ENCODE measurements at regions of chr10 and their contacts with region 1.

Region 1: GRCh38 chr10:33330543-33331378 is 3.7 kb downstream of the NRP1 start:
- DNase-seq: no peak
- H3K4me3 ChIP-seq: peak overlapping the region; percentile 80 to 86
- H3K27ac ChIP-seq: peak overlapping the region; percentile 20
- H3K4me1 ChIP-seq: peaks cover 26% of the 10 kb centered on the region
- H3K27me3 ChIP-seq: no peaks in the 10 kb centered on the region
- CTCF ChIP-seq: peak; percentile 49 to 90 (median 80)
- POLR2A ChIP-seq: no peak

Region 2: DNA sequence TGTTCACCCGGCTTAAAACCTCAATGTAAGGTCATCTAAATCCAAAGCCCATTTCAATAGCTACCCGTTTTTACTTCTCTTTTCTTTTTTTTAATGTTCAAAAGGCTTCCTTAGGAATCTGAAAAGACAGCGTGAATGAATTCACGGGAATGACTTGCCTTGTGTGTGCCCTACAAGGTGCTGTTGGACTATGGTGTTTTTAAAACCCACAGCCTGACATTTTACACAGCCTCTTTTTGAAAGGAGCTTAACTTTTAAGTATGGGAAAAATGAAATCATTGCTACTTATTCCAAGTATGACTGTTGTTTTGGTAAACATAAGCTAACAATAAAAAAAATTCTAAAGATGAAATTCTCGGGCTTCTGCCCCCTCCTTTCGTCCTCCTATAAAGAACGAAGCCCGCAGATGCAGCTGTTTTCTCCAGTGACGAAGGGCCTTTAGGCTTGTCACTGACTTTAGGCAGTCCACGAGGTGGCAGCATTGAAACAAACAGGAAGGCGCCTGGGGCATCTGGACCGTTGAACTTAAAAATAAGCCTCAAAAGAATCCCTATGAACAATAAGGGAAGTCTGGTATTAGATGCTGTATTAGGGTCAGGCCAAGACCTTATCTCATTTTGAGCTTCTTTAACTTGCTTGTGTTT is 137.6 kb before region 1 on chr10:
- intact Hi-C with region 1: loop called (anchors 10 kb)
- DNase-seq: no peak
- H3K4me3 ChIP-seq: no peak overlapping the region
- H3K27ac ChIP-seq: peak overlapping the region; percentile 54
- H3K4me1 ChIP-seq: peaks cover 47% of the 10 kb centered on the region
- H3K27me3 ChIP-seq: no peaks in the 10 kb centered on the region
- CTCF ChIP-seq: peak; percentile 19 to 79 (median 72)
- POLR2A ChIP-seq: no peak

Region 3: DNA sequence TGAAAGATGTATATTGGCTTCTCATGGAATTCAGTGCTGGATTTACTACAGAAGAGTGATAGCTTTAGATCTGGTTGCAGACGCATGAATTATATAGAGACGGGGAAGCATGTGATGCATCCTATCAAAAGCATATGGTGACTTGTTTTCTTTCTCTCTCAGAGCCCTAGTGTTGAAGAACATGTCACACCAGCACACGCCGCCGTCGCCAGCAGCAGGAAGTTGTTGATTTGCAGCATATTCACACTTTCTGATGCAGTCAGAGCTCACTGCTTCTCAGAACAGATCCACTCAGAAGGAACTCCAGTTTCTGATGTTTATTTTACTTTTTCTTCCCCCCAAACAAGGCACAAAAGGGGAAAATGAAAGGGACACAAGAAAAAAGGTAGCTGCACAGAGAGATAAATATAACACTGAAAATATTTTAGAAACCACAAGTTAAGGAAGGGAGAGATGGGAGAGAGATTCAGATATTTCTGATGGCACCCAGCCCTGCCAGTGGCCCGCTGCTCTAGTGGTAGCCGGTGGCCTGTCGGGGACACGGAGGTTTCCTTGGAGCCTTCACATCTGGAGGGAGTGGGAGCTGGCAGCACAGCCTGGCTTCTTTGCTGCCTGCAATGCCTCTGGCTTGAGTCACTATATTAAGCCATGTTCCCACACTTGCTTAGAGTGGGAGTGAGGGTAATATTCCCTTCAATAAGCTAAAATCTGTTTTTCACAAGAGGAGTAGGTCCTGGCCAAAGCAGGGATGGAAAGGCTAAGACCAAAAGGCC is 119.5 kb before region 1 on chr10:
- intact Hi-C with region 1: no loop called
- DNase-seq: no peak
- H3K4me3 ChIP-seq: no peak overlapping the region
- H3K27ac ChIP-seq: peak overlapping the region; percentile 66
- H3K4me1 ChIP-seq: peaks cover 14% of the 10 kb centered on the region
- H3K27me3 ChIP-seq: no peaks in the 10 kb centered on the region
- CTCF ChIP-seq: no peak
- POLR2A ChIP-seq: no peak

Region 4: GRCh38 chr10:33489501-33490176 is 158.9 kb after region 1 on chr10:
- intact Hi-C with region 1: loop called (anchors 10 kb)
- DNase-seq: no peak
- H3K4me3 ChIP-seq: no peak overlapping the region
- H3K27ac ChIP-seq: peak overlapping the region; percentile 12
- H3K4me1 ChIP-seq: peaks cover 18% of the 10 kb centered on the region
- H3K27me3 ChIP-seq: no peaks in the 10 kb centered on the region
- CTCF ChIP-seq: no peak
- POLR2A ChIP-seq: no peak

Region 5: GRCh38 chr10:34102237-34102673 is 771.5 kb after region 1 on chr10:
- intact Hi-C with region 1: loop called (anchors 10 kb)
- DNase-seq: peak in 1 of 2 donors; percentile 97
- H3K4me3 ChIP-seq: no peak overlapping the region
- H3K27ac ChIP-seq: peak overlapping the region; percentile 41
- H3K4me1 ChIP-seq: peaks cover 47% of the 10 kb centered on the region
- H3K27me3 ChIP-seq: no peaks in the 10 kb centered on the region
- CTCF ChIP-seq: no peak
- POLR2A ChIP-seq: no peak

Region 6: DNA sequence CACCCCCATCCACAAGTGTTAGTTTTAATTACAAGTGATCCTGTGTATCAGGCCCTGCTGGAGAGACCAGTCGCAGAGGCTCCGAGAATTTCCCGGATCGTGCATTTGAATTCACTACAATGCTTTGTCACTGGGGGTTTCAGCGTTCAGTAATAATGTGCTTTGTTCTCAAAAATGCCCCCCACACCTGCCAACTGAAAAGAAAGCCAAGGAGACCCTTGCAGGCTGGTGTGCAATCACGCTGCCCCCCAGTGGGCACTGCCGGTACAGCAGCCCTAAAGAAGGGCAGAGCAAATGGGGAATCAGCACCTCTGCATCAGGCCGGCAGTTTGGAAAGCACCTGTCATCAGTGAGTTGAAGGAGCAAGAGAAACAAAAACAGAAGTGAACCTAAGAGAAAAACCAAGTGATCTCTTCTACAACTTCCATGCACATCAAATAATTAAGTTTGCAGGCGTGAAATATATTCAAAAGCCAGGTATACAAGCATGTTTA is 1306.7 kb after region 1 on chr10:
- intact Hi-C with region 1: loop called (anchors 5 kb)
- DNase-seq: no peak
- H3K4me3 ChIP-seq: no peak overlapping the region
- H3K27ac ChIP-seq: no peak overlapping the region
- H3K4me1 ChIP-seq: peaks cover 32% of the 10 kb centered on the region
- H3K27me3 ChIP-seq: no peaks in the 10 kb centered on the region
- CTCF ChIP-seq: peak; percentile 75 to 89 (median 85)
- POLR2A ChIP-seq: no peak

Measured in vagina (tissue), 2 donors.